ENCODE measurements at regions of chr1 and their contacts with region 1.

Region 1: GRCh38 chr1:93304716-93305138 is 41.0 kb upstream of the DR1 start:
- DNase-seq: peak; percentile 63
- H3K4me3 ChIP-seq: no peak overlapping the region; a peak in 1 of 4 replicates
- H3K27ac ChIP-seq: no peak overlapping the region
- H3K4me1 ChIP-seq: no peaks in the 10 kb centered on the region
- H3K27me3 ChIP-seq: no peaks in the 10 kb centered on the region
- CTCF ChIP-seq: peak; percentile 94
- EP300 ChIP-seq: no peak
- RAD21 ChIP-seq: peak; percentile 94

Region 2: DNA sequence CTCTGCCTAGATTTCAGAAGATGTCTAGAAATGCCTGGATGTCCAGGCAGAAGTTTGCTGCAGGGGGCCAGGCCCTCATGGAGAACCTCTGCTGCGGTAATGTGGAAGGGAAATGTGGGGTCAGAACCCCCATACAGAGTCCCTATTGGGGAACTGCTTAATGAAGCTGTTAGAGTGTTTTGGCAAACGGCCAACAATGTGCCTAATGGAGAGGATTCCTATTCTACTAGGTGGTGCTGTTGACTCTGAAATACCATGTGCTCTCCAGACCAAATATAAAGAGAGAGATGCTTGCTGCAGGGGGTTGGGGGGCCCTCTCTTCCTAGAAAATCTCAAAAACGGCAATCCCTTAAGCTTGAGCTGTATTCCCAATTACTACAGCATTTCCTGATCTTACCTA is 16.2 kb before region 1 on chr1:
- CTCF ChIA-PET with region 1: interaction called, 14 read pairs
- POLR2A ChIA-PET with region 1: no interaction called
- DNase-seq: no peak
- H3K4me3 ChIP-seq: no peak overlapping the region
- H3K27ac ChIP-seq: no peak overlapping the region
- H3K4me1 ChIP-seq: no peaks in the 10 kb centered on the region
- H3K27me3 ChIP-seq: no peaks in the 10 kb centered on the region
- CTCF ChIP-seq: no peak
- EP300 ChIP-seq: no peak
- RAD21 ChIP-seq: no peak

Region 3: DNA sequence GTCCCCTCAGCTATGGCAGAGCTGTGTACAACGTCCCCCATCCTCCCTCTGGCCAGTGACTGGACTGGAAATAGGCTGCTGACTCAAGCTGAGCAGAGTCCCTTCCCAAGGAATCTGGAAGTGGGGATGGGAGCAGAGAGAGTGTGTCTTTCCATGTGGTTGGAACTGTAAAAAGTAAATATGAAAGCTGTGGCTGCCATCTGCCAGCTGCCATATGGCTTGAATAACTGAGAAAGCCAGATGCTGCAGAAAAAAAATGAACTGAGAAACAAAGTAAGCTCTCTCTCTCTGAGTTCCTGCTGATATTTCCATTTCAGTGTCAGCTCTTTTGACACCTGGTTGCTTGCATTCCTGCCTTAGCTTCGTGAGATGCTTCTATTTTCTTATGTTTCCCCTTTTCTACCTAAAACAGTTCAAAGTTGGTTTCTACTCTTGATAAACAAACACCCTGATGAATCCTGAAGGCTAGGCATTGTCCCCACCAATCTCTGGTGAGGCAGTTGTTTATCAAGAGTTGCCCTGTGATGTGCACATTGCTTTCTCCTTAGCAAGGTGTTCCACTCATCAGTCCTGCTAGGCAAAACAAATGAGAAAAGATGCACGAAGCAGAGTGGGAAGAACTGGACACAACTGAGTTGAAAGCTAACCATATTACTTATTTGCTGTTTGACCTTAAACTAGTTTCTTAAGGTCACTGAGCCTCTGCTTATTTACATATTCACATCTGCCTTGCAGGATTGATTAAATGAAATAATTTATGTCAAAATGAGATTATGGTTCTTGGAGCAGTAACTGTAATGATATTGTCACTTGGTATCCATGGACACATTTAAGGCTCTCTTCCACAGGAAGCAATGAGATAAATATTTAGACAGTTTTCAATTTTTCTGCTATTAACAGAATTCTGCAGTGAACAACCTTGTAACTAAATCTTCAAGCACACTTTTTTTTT is 24.4 kb after region 1 on chr1:
- CTCF ChIA-PET with region 1: interaction called, 25 read pairs
- POLR2A ChIA-PET with region 1: no interaction called
- DNase-seq: peak; percentile 23
- H3K4me3 ChIP-seq: no peak overlapping the region
- H3K27ac ChIP-seq: peak overlapping the region in 1 of 2 experiments; percentile 58; a peak in 1 of 4 replicates
- H3K4me1 ChIP-seq: peaks cover 8 to 9% of the 10 kb centered on the region in 2 experiments; a peak in 3 of 4 replicates
- H3K27me3 ChIP-seq: no peaks in the 10 kb centered on the region
- CTCF ChIP-seq: no peak
- EP300 ChIP-seq: no peak
- RAD21 ChIP-seq: no peak

Region 4: GRCh38 chr1:93345633-93346420 is 41.1 kb after region 1 on chr1 and contains the start of gene DR1:
- CTCF ChIA-PET with region 1: interaction called, 17 read pairs
- POLR2A ChIA-PET with region 1: interaction called, 3 read pairs
- DNase-seq: peak; percentile 98
- H3K4me3 ChIP-seq: peak within 1 kb of the TSS; percentile 91 to 96
- H3K27ac ChIP-seq: peak within 1 kb of the TSS; percentile 98 to 99
- H3K4me1 ChIP-seq: peaks cover 4 to 7% of the 10 kb centered on the region in 2 experiments; a peak in 2 of 4 replicates
- H3K27me3 ChIP-seq: no peaks in the 10 kb centered on the region
- CTCF ChIP-seq: no peak
- EP300 ChIP-seq: peak in 1 of 2 experiments; percentile 81; a peak in 1 of 4 replicates
- RAD21 ChIP-seq: no peak
- polyA plus RNA-seq, gene DR1: 12.8 and 17.5 TPM in 2 replicates

Region 5: GRCh38 chr1:93437976-93438605 is 133.4 kb after region 1 on chr1:
- CTCF ChIA-PET with region 1: interaction called, 16 read pairs
- POLR2A ChIA-PET with region 1: no interaction called
- DNase-seq: peak; percentile 63
- H3K4me3 ChIP-seq: no peak overlapping the region; a peak in 1 of 4 replicates
- H3K27ac ChIP-seq: no peak overlapping the region
- H3K4me1 ChIP-seq: peaks cover 0 to 6% of the 10 kb centered on the region in 2 experiments; a peak in 2 of 4 replicates
- H3K27me3 ChIP-seq: no peaks in the 10 kb centered on the region
- CTCF ChIP-seq: peak; percentile 82
- EP300 ChIP-seq: no peak
- RAD21 ChIP-seq: peak; percentile 88